Tibial artery (tissue), 4 donors: ENCODE measurements at regions of chr6 and their contacts with region 1.

Region 1: DNA sequence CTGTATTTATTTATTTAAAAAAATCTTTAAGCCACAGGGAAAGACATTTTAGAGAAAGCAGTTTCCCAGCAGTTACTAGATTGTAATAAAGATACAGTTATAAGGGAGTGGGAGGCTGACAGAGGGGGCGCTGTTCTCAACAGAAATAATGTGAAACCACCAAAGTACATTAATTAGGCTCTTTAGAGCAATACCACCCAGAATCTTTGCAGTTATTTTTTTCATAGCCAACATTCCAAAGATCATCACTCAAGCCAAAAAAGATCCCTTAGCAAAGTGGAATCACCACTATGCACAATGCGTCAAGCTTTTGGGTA is 331.3 kb upstream of the DEFB112 start:
- DNase-seq: no peak
- H3K4me3 ChIP-seq: no peak overlapping the region
- H3K27ac ChIP-seq: no peak overlapping the region
- H3K4me1 ChIP-seq: no peaks in the 10 kb centered on the region
- H3K27me3 ChIP-seq: no peaks in the 10 kb centered on the region
- CTCF ChIP-seq: no peak

Region 2: GRCh38 chr6:50361641-50362331 is 19.3 kb before region 1 on chr6:
- intact Hi-C with region 1: loop called (anchors 2 kb)
- DNase-seq: no peak
- H3K4me3 ChIP-seq: no peak overlapping the region
- H3K27ac ChIP-seq: no peak overlapping the region
- H3K4me1 ChIP-seq: no peaks in the 10 kb centered on the region
- H3K27me3 ChIP-seq: no peaks in the 10 kb centered on the region
- CTCF ChIP-seq: no peak